A673 (cell line): ENCODE measurements at regions of chr5 and their contacts with region 1.

Region 1: DNA sequence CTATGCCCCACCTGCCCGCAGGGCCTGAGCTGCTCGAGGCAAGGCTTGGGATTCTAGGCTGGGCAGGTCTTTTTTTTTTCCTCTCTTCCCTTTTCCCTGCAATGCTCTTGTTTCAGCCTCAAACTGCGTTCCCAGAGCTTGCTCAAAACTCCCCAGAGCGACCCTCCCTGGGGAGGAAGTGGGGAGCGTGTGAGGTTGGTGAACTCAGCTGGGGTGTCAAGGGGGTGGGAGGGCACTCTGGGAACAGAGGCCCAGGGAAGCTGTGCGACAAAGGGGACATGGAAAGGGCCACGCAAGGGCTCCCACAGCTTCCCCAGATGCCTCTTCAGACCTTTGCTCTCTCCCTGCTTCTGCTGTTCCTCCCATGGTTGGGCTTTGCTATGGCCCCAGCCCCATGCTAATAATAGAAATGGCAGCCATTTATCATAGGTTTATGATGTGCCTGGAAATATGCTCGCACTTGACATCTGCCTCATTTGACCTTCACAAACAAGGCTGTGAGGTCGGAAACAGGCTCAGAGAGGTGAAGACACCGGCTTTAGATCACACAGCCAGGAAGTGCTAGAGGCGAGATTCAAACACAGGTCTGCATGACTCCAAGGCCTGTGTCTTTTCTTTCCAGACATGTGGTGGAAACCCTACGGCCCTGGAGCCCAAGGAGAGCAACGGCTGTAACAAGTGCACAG is 40.9 kb upstream of the IL17B start:
- DNase-seq: no peak
- H3K4me3 ChIP-seq: no peak overlapping the region
- H3K27ac ChIP-seq: no peak overlapping the region
- H3K4me1 ChIP-seq: peaks cover 8% of the 10 kb centered on the region
- H3K27me3 ChIP-seq: no peaks in the 10 kb centered on the region
- CTCF ChIP-seq: no peak

Region 2: GRCh38 chr5:149521738-149522685 is 102.0 kb after region 1 on chr5:
- CTCF ChIA-PET with region 1: no interaction called
- POLR2A ChIA-PET with region 1: interaction called, 12 read pairs
- intact Hi-C with region 1: no loop called
- DNase-seq: no peak
- H3K4me3 ChIP-seq: no peak overlapping the region
- H3K27ac ChIP-seq: no peak overlapping the region
- H3K4me1 ChIP-seq: peaks cover 20% of the 10 kb centered on the region
- H3K27me3 ChIP-seq: no peaks in the 10 kb centered on the region
- CTCF ChIP-seq: no peak